PC-3 (cell line): ENCODE measurements at regions of chr9 and their contacts with region 1.

Region 1: DNA sequence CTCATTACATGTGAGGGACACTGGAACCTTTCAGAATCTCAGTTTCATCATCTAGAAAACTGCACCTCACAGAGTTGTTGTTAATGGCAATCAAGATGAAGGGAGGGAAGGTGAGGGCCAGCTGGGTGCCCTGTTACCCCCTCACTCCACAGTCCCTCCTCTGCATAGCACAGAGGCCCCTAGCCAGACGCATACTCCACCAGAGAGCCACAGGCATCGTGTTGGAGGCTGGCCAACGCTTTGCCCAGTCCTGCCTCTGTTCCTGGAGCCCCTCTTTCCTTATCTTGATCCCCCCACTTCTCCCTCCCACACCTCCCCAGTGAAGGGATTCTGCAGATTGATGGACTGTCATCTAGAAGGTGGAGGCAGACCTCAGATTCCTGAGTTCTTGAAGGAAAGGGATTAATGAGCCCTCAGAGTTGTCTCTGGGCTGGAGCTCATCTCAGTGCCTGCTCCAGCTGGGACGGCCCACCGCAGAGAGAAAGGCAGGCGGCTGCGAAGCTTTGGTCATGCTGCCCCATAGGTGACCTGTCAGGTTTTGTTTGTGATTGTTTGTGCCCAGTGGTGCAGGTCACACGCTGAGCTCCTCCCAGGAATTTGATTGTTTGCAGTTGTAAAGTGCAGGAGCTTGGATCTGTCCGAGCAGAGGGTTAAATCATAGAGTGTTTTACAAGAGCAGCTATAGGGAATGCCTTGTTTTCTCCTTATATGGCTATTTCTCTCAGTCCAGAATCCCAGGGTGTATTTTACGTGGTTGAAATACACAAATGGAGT is 487.3 kb downstream of the CCDC171 start:
- DNase-seq: peak; percentile 70
- ATAC-seq: peak; percentile 83
- H3K4me3 ChIP-seq: no peak overlapping the region
- H3K27ac ChIP-seq: peak overlapping the region; percentile 62
- H3K4me1 ChIP-seq: peaks cover 28% of the 10 kb centered on the region
- H3K27me3 ChIP-seq: no peaks in the 10 kb centered on the region
- CTCF ChIP-seq: no peak

Region 2: GRCh38 chr9:15915711-15916110 is 124.5 kb before region 1 on chr9:
- CTCF ChIA-PET with region 1: no interaction called
- POLR2A ChIA-PET with region 1: interaction called, 27 read pairs
- intact Hi-C with region 1: no loop called
- DNase-seq: peak; percentile 2
- ATAC-seq: no peak
- H3K4me3 ChIP-seq: no peak overlapping the region
- H3K27ac ChIP-seq: no peak overlapping the region
- H3K4me1 ChIP-seq: no peaks in the 10 kb centered on the region
- H3K27me3 ChIP-seq: no peaks in the 10 kb centered on the region
- CTCF ChIP-seq: no peak